A673 (cell line): ENCODE measurements at regions of chr11 and their contacts with region 1.

Region 1: GRCh38 chr11:46537537-46538295 is 56.1 kb downstream of the AMBRA1 start:
- DNase-seq: peak; percentile 96
- H3K4me3 ChIP-seq: no peak overlapping the region
- H3K27ac ChIP-seq: peak overlapping the region; percentile 1
- H3K4me1 ChIP-seq: peaks cover 30% of the 10 kb centered on the region
- H3K27me3 ChIP-seq: no peaks in the 10 kb centered on the region
- CTCF ChIP-seq: peak; percentile 100

Region 2: DNA sequence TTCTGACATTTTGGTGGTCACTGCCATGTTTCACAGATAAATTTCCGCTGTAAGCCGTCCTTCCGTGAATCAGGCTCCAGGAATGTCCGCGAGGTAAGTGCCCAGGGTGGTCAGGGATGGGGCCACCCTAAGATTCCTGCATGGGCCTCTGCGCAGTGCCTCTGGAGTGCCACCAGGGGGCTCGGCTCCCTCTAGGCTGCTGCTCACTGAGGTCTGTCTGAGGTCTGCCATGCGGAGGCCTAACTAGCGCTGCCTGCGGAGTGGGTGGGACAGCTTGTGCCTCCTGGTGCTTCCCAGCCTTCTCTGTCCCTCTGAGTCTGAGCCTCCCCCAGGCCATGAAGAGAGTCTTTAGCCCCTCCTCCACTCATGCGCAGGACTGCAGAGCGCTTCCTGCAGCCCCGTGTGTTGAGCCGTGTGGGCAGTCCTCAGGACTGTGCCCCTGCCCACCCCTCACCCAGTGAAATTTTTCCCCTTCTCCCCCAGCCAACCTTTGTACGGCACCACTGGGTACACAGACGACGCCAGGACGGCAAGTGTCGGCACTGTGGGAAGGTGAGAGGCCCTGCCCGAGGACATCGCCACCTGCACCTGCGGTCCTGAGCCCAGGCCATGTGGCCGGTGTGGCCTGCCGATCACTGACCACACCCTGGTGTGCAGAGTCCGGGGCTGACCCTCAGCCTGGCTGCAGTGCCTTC is 168.1 kb before region 1 on chr11:
- CTCF ChIA-PET with region 1: interaction called, 3 read pairs
- POLR2A ChIA-PET with region 1: no interaction called
- intact Hi-C with region 1: loop called (anchors 1 kb)
- DNase-seq: peak; percentile 96
- H3K4me3 ChIP-seq: no peak overlapping the region
- H3K27ac ChIP-seq: no peak overlapping the region
- H3K4me1 ChIP-seq: peaks cover 13% of the 10 kb centered on the region
- H3K27me3 ChIP-seq: no peaks in the 10 kb centered on the region
- CTCF ChIP-seq: peak; percentile 100

Region 3: GRCh38 chr11:46489661-46490560 is 47.8 kb before region 1 on chr11:
- CTCF ChIA-PET with region 1: interaction called, 13 read pairs
- POLR2A ChIA-PET with region 1: no interaction called
- intact Hi-C with region 1: loop called (anchors 2 kb)
- DNase-seq: peak; percentile 90
- H3K4me3 ChIP-seq: no peak overlapping the region
- H3K27ac ChIP-seq: no peak overlapping the region
- H3K4me1 ChIP-seq: peaks cover 59% of the 10 kb centered on the region
- H3K27me3 ChIP-seq: no peaks in the 10 kb centered on the region
- CTCF ChIP-seq: peak; percentile 99

Region 4: GRCh38 chr11:46513934-46514342 is 23.8 kb before region 1 on chr11:
- CTCF ChIA-PET with region 1: no interaction called
- POLR2A ChIA-PET with region 1: no interaction called
- intact Hi-C with region 1: loop called (anchors 2 kb)
- DNase-seq: peak; percentile 79
- H3K4me3 ChIP-seq: no peak overlapping the region
- H3K27ac ChIP-seq: no peak overlapping the region
- H3K4me1 ChIP-seq: peaks cover 10% of the 10 kb centered on the region
- H3K27me3 ChIP-seq: no peaks in the 10 kb centered on the region
- CTCF ChIP-seq: no peak